ENCODE measurements at regions of chr5 and their contacts with region 1.

Region 1: GRCh38 chr5:150458819-150459557 is 9.4 kb upstream of the RPS14 start:
- DNase-seq: no peak
- ATAC-seq: peak; percentile 91
- H3K4me3 ChIP-seq: peak overlapping the region; percentile 39; the same call in 1 of the 2 replicates
- H3K27ac ChIP-seq: no peak overlapping the region
- H3K4me1 ChIP-seq: peaks cover 35% of the 10 kb centered on the region
- H3K27me3 ChIP-seq: no peaks in the 10 kb centered on the region
- CTCF ChIP-seq: peak; percentile 62 to 93 (median 84)
- EP300 ChIP-seq: no peak
- POLR2A ChIP-seq: no peak
- RAD21 ChIP-seq: peak; percentile 92

Region 2: GRCh38 chr5:150398722-150399523 is 60.1 kb before region 1 on chr5:
- CTCF ChIA-PET with region 1: interaction called, 12 read pairs
- POLR2A ChIA-PET with region 1: no interaction called
- RAD21 ChIA-PET with region 1: no interaction called
- SMC1A ChIA-PET with region 1: interaction called, 3 read pairs
- in situ Hi-C with region 1: no loop called
- intact Hi-C with region 1: no loop called
- DNase-seq: no peak
- ATAC-seq: peak; percentile 66
- H3K4me3 ChIP-seq: no peak overlapping the region
- H3K27ac ChIP-seq: no peak overlapping the region
- H3K4me1 ChIP-seq: peaks cover 5% of the 10 kb centered on the region
- H3K27me3 ChIP-seq: no peaks in the 10 kb centered on the region
- CTCF ChIP-seq: peak; percentile 74 to 81 (median 77)
- EP300 ChIP-seq: no peak
- POLR2A ChIP-seq: peak; percentile 77
- RAD21 ChIP-seq: peak; percentile 71

Region 3: GRCh38 chr5:150486402-150487198 is 27.6 kb after region 1 on chr5:
- CTCF ChIA-PET with region 1: interaction called, 132 read pairs
- POLR2A ChIA-PET with region 1: interaction called, 25 read pairs
- RAD21 ChIA-PET with region 1: interaction called, 143 read pairs
- SMC1A ChIA-PET with region 1: interaction called, 65 read pairs
- in situ Hi-C with region 1: no loop called
- intact Hi-C with region 1: loop called (anchors 2 kb)
- DNase-seq: no peak
- ATAC-seq: peak; percentile 35
- H3K4me3 ChIP-seq: peak overlapping the region; percentile 88
- H3K27ac ChIP-seq: peak overlapping the region; percentile 72
- H3K4me1 ChIP-seq: peaks cover 47% of the 10 kb centered on the region
- H3K27me3 ChIP-seq: no peaks in the 10 kb centered on the region
- CTCF ChIP-seq: no peak; a peak in 1 of 6 replicates
- EP300 ChIP-seq: no peak
- POLR2A ChIP-seq: no peak
- RAD21 ChIP-seq: no peak

Region 4: GRCh38 chr5:150544611-150545219 is 85.7 kb after region 1 on chr5:
- CTCF ChIA-PET with region 1: interaction called, 229 read pairs
- POLR2A ChIA-PET with region 1: interaction called, 3 read pairs
- RAD21 ChIA-PET with region 1: interaction called, 62 read pairs
- SMC1A ChIA-PET with region 1: interaction called, 25 read pairs
- in situ Hi-C with region 1: loop called (anchors 5 kb)
- intact Hi-C with region 1: loop called (anchors 1 kb)
- DNase-seq: peak; percentile 17
- ATAC-seq: peak; percentile 100
- H3K4me3 ChIP-seq: no peak overlapping the region
- H3K27ac ChIP-seq: no peak overlapping the region
- H3K4me1 ChIP-seq: no peaks in the 10 kb centered on the region
- H3K27me3 ChIP-seq: no peaks in the 10 kb centered on the region
- CTCF ChIP-seq: peak; percentile 96 to 99 (median 99); a peak in 5 of 6 replicates
- EP300 ChIP-seq: no peak
- POLR2A ChIP-seq: no peak
- RAD21 ChIP-seq: peak; percentile 87

Region 5: DNA sequence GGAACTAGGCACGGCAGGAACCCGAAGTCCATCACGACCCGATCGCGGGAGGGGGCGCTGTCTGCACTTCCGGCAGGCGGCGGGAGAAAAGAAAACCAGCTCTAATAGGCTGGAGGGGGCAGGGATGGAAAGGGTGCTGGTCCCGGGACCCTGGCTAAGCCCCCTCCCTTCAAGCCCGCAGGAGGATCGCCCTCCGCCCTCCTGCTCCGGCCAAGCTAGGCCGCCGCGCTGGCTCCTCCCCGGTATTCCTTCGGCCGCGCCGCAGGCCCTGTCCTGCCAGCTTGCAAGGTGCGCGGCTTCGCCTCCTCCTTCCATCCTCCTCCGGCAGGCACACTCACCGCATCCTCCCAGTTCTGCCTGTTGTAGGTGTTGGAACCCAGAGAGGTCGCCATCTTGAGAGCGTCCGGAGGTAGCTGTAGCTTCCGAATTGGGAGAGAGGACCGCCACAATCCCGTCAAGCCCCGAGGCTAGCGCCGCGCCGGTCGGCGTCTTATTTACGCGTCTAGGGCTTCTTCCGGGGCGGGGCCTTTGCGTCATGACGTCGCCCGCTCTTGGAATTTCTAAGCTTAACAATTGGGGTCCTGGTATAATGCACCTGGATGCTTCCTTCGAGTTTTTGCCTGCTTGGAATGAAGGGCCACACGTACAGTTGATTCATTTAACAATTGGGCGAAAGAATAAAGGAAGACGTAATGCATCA is 241.8 kb after region 1 on chr5 and contains the start of gene RBM22:
- CTCF ChIA-PET with region 1: interaction called, 8 read pairs
- POLR2A ChIA-PET with region 1: no interaction called
- RAD21 ChIA-PET with region 1: interaction called, 8 read pairs
- SMC1A ChIA-PET with region 1: no interaction called
- in situ Hi-C with region 1: no loop called
- intact Hi-C with region 1: loop called (anchors 5 kb)
- DNase-seq: peak; percentile 57
- ATAC-seq: peak; percentile 98
- H3K4me3 ChIP-seq: peak within 1 kb of the TSS; percentile 91
- H3K27ac ChIP-seq: peak within 1 kb of the TSS; percentile 87
- H3K4me1 ChIP-seq: no peaks in the 10 kb centered on the region
- H3K27me3 ChIP-seq: no peaks in the 10 kb centered on the region
- CTCF ChIP-seq: peak; percentile 57 to 70 (median 60)
- EP300 ChIP-seq: peak in 1 of 2 experiments; percentile 22; a peak in 1 of 4 replicates
- POLR2A ChIP-seq: peak; percentile 93
- RAD21 ChIP-seq: peak; percentile 29; the same call in 1 of the 2 replicates
- polyA plus RNA-seq, gene RBM22: 26.3 to 40.3 TPM

Measured in GM12878 (cell line).